ENCODE measurements at regions of chr10 and their contacts with region 1.

Region 1: GRCh38 chr10:61628875-61629513 is 33.7 kb upstream of the CABCOCO1 start:
- DNase-seq: peak; percentile 90
- H3K4me3 Mint-ChIP-seq: peak overlapping the region; percentile 51
- H3K27ac Mint-ChIP-seq: peak overlapping the region; percentile 90
- H3K4me1 Mint-ChIP-seq: peaks cover 37% of the 10 kb centered on the region
- H3K27me3 Mint-ChIP-seq: no peaks in the 10 kb centered on the region
- CTCF ChIP-seq: no peak

Region 2: GRCh38 chr10:61397175-61397986 is 231.6 kb before region 1 on chr10:
- CTCF ChIA-PET with region 1: no interaction called
- POLR2A ChIA-PET with region 1: interaction called, 15 read pairs
- intact Hi-C with region 1: no loop called
- DNase-seq: peak; percentile 64
- H3K4me3 Mint-ChIP-seq: peak overlapping the region; percentile 58
- H3K27ac Mint-ChIP-seq: peak overlapping the region; percentile 73
- H3K4me1 Mint-ChIP-seq: peaks cover 8% of the 10 kb centered on the region
- H3K27me3 Mint-ChIP-seq: no peaks in the 10 kb centered on the region
- CTCF ChIP-seq: no peak

Region 3: GRCh38 chr10:61643316-61643751 is 14.3 kb after region 1 on chr10:
- CTCF ChIA-PET with region 1: no interaction called
- POLR2A ChIA-PET with region 1: interaction called, 12 read pairs
- intact Hi-C with region 1: no loop called
- DNase-seq: peak; percentile 51
- H3K4me3 Mint-ChIP-seq: no peak overlapping the region
- H3K27ac Mint-ChIP-seq: peak overlapping the region; percentile 61
- H3K4me1 Mint-ChIP-seq: peaks cover 14% of the 10 kb centered on the region
- H3K27me3 Mint-ChIP-seq: no peaks in the 10 kb centered on the region
- CTCF ChIP-seq: no peak

Measured in MCF 10A (cell line).